ENCODE measurements at regions of chr9 and their contacts with region 1.

Region 1: DNA sequence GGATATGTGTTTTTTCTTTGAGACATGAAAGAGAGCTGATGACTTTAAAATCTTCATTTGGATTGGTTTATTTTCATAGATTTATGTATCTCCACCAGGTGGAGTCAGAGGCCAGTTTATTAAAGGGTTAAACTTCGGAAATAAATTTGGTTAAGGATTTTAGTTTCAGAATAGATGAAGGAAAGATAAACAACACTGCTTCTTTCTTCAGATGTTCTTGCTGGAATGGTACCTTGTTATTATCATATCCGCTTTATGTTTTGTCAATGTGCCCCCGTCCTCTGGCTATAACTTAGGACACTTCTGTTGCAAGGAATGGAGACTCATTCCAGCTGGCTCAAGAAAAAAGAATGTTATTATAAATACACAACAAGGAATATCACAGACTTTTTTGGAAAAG is 81.2 kb downstream of the ALDH1A1 start:
- DNase-seq: no peak
- H3K4me3 ChIP-seq: no peak overlapping the region
- H3K27ac ChIP-seq: peak overlapping the region in 3 of 4 donors; percentile 7 to 72 (median 57)
- H3K4me1 ChIP-seq: peaks cover 0 to 46% (median 33%) of the 10 kb centered on the region in 4 donors
- H3K27me3 ChIP-seq: no peaks in the 10 kb centered on the region
- CTCF ChIP-seq: peak; percentile 31 to 44 (median 42)
- EP300 ChIP-seq: no peak
- POLR2A ChIP-seq: no peak

Region 2: DNA sequence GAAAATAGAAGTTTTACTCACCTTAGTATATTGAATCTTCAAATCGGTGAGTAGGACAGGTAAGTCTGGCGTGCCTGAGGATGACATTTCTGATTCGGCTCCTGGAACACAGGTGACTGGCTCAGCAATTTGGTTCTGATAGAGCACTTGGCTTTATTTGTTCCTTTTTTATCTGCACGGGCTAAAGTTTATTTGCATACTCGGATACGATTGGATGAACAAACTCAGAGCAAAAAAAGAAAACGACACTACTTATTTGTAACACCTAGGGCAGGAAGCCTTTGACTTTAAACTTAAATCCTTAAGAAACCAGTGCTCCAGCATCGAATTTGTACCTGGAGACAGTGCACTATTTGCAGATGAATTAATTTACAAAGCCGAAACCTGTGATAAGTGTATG is 81.2 kb after region 1 on chr9 and contains the start of gene ALDH1A1:
- intact Hi-C with region 1: loop called (anchors 5 kb)
- DNase-seq: no peak
- H3K4me3 ChIP-seq: peak within 1 kb of the TSS; percentile 44 to 58 (median 49)
- H3K27ac ChIP-seq: peak within 1 kb of the TSS; percentile 64 to 88 (median 80)
- H3K4me1 ChIP-seq: peaks cover 0 to 30% (median 16%) of the 10 kb centered on the region in 4 donors
- H3K27me3 ChIP-seq: no peaks in the 10 kb centered on the region
- CTCF ChIP-seq: no peak
- EP300 ChIP-seq: no peak
- POLR2A ChIP-seq: peak; percentile 55 to 74
- total RNA-seq, gene ALDH1A1: 241 to 353 (median 300) TPM

Measured in sigmoid colon (tissue), 7 donors.